Heart right ventricle (tissue), 16 donors: ENCODE measurements at regions of chr2 and their contacts with region 1.

Region 1: DNA sequence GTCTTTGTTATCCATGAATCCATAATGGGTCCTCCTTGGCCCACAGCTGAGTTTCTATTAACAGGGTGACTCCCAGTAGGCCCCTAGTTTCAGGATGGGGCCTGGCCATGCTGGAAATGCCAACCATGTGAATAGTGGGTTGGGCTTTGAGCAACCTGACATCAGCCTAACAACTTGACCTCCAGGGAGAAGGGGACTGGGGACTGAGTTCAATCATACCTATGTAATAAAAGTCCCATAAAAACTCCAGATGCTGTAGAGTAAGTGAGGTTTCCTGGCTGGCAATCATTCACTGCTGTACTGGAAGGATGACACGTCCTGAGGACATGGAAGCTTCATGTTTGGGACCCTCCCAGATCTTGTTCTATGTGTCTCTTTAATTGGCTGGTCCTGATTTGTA is 7.9 kb downstream of the REV1 start:
- DNase-seq: peak in 1 of 2 donors; percentile 14
- ATAC-seq: peak in 6 of 8 donors; percentile 40 to 73 (median 52)
- H3K4me3 ChIP-seq: no peak overlapping the region
- H3K27ac ChIP-seq: peak overlapping the region in 4 of 10 donors; percentile 1 to 30 (median 22)
- H3K4me1 ChIP-seq: peaks cover 4 to 97% (median 71%) of the 10 kb centered on the region in 9 donors
- H3K27me3 ChIP-seq: no peaks in the 10 kb centered on the region
- CTCF ChIP-seq: no peak

Region 2: GRCh38 chr2:99442837-99443236 is 39.1 kb before region 1 on chr2:
- intact Hi-C with region 1: loop called in 4 of 10 experiments (anchors 5 kb)
- DNase-seq: no peak
- ATAC-seq: peak in 6 of 8 donors; percentile 42 to 71 (median 62)
- H3K4me3 ChIP-seq: no peak overlapping the region
- H3K27ac ChIP-seq: no peak overlapping the region
- H3K4me1 ChIP-seq: peaks cover 0 to 14% (median 7%) of the 10 kb centered on the region in 9 donors
- H3K27me3 ChIP-seq: no peaks in the 10 kb centered on the region
- CTCF ChIP-seq: peak in 8 of 9 donors; percentile 26 to 70 (median 53)

Region 3: GRCh38 chr2:99448556-99448955 is 33.4 kb before region 1 on chr2:
- intact Hi-C with region 1: loop called in 6 of 10 experiments (anchors 5 kb)
- DNase-seq: no peak
- ATAC-seq: no peak
- H3K4me3 ChIP-seq: no peak overlapping the region
- H3K27ac ChIP-seq: no peak overlapping the region
- H3K4me1 ChIP-seq: peaks cover 0 to 30% (median 13%) of the 10 kb centered on the region in 9 donors
- H3K27me3 ChIP-seq: no peaks in the 10 kb centered on the region
- CTCF ChIP-seq: no peak